ENCODE measurements at regions of chr1 and their contacts with region 1.

Region 1: GRCh38 chr1:180502360-180503273 is at the start of gene ACBD6:
- DNase-seq: peak; percentile 56 to 70
- ATAC-seq: peak; percentile 93 to 95
- H3K4me3 ChIP-seq: peak within 1 kb of the TSS; percentile 89 to 97 (median 94)
- H3K27ac ChIP-seq: peak within 1 kb of the TSS; percentile 85 to 93 (median 90)
- H3K4me1 ChIP-seq: peaks cover 23 to 28% of the 10 kb centered on the region in 2 donors
- H3K27me3 ChIP-seq: no peaks in the 10 kb centered on the region
- CTCF ChIP-seq: peak in 3 of 5 experiments; percentile 7 to 33 (median 30)
- POLR2A ChIP-seq: peak; percentile 30 to 49
- total RNA-seq, gene ACBD6: 15.0 to 27.4 (median 19.1) TPM

Region 2: DNA sequence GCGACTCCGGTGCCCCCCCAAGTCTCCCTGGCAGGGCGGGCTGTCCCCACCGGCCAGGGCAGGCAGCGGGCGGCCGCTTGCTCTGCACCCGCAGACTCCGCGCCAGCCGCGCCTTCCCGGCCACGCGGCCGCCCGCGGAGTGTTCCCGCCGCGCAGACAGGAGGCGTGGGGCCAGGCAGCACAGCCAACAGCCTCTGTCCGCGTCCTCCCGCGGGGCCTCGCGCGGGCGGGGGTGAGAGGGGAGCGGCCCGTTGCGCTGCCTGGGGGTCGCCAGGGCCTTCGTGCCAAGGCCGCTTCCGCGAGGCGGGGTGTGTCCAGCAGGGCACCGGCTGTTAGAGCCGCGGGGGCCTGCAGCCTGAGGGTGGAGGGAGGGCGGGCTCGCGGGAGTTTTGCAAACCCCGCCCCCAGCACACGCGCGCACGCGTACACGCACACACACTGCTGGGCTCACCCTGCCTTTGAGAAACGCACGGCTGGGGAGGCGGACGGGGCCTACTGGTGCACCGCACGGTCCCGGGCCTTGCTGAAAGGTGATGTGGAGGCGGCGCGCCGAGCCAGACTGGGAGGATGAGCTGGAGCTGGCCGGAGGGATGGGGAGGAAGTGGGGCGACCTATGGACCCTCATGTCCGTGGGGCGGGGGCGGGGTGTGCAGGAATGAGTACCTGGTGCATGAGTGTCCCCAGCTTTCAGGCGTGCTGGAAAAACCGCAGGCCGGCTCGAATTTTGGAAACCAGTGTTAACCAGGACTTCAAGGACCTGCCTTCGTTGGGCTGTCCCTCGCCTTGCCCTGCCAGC is 451.6 kb after region 1 on chr1:
- in situ Hi-C with region 1: no loop called
- intact Hi-C with region 1: loop called (anchors 10 kb)
- DNase-seq: peak in 1 of 2 donors; percentile 41
- ATAC-seq: peak; percentile 39 to 41
- H3K4me3 ChIP-seq: peak overlapping the region; percentile 48 to 87 (median 62)
- H3K27ac ChIP-seq: peak overlapping the region; percentile 67 to 77 (median 72)
- H3K4me1 ChIP-seq: peaks cover 29 to 43% of the 10 kb centered on the region in 2 donors
- H3K27me3 ChIP-seq: no peaks in the 10 kb centered on the region
- CTCF ChIP-seq: peak in 2 of 5 experiments; percentile 0 to 18
- POLR2A ChIP-seq: no peak

Region 3: GRCh38 chr1:181021811-181022434 is 519.3 kb after region 1 on chr1:
- in situ Hi-C with region 1: loop called in 1 of 4 experiments (anchors 25 kb)
- intact Hi-C with region 1: loop called (anchors 5 kb)
- DNase-seq: peak; percentile 38 to 45
- ATAC-seq: peak; percentile 56 to 60
- H3K4me3 ChIP-seq: peak overlapping the region; percentile 68 to 99 (median 85)
- H3K27ac ChIP-seq: peak overlapping the region; percentile 88 to 98 (median 96)
- H3K4me1 ChIP-seq: peaks cover 13 to 20% of the 10 kb centered on the region in 2 donors
- H3K27me3 ChIP-seq: no peaks in the 10 kb centered on the region
- CTCF ChIP-seq: no peak
- POLR2A ChIP-seq: no peak

Measured in gastrocnemius medialis (tissue), 4 donors.